Activated CD8-positive, alpha-beta T cell treated with anti-CD3 and anti-CD28 coated beads, Interleukin-2, amount 10 ng/mL, durations not matched to agents 7 days and 5 days (primary cell): ENCODE measurements at regions of chr1 and their contacts with region 1.

Region 1: DNA sequence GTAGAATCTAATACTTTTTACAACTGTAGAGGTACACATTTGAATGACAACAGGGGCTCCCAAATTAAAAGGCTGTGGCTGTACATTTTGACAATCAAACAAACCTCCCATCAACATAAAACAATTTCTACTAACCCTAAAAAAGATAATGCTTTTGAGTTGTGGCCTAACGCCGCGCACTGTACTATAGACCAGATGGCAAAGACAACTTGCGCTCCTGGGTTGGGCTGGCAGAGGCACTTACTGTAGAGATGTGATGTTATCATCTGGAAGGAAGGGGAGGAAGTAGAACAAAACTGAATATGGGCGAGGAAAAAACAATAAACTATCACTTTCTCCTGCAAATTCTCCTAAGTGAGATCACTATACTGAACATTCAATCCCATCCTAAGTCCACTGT is 26.1 kb downstream of the SPRTN start:
- DNase-seq: no peak
- ATAC-seq: no peak
- H3K4me3 Mint-ChIP-seq: no peak overlapping the region
- H3K27ac Mint-ChIP-seq: no peak overlapping the region
- H3K4me1 Mint-ChIP-seq: no peaks in the 10 kb centered on the region
- H3K27me3 Mint-ChIP-seq: no peaks in the 10 kb centered on the region

Region 2: GRCh38 chr1:231139659-231140654 is 224.2 kb before region 1 on chr1:
- CTCF ChIA-PET with region 1: no interaction called
- POLR2A ChIA-PET with region 1: no interaction called
- DNase-seq: no peak
- ATAC-seq: no peak
- H3K4me3 Mint-ChIP-seq: no peak overlapping the region
- H3K27ac Mint-ChIP-seq: no peak overlapping the region
- H3K4me1 Mint-ChIP-seq: peaks cover 7% of the 10 kb centered on the region
- H3K27me3 Mint-ChIP-seq: peaks cover 18% of the 10 kb centered on the region

Region 3: GRCh38 chr1:231603598-231604275 is 239.5 kb after region 1 on chr1:
- CTCF ChIA-PET with region 1: interaction called, 10 read pairs
- POLR2A ChIA-PET with region 1: no interaction called
- DNase-seq: peak; percentile 65
- ATAC-seq: peak; percentile 91
- H3K4me3 Mint-ChIP-seq: peak overlapping the region; percentile 92
- H3K27ac Mint-ChIP-seq: peak overlapping the region; percentile 89
- H3K4me1 Mint-ChIP-seq: peaks cover 18% of the 10 kb centered on the region
- H3K27me3 Mint-ChIP-seq: peaks cover 11% of the 10 kb centered on the region